ENCODE measurements at regions of chrX and their contacts with region 1.

Region 1: GRCh38 chrX:53683556-53684414 is 2.7 kb downstream of the HUWE1 start:
- DNase-seq: peak; percentile 78 to 98 (median 84)
- ATAC-seq: peak; percentile 82
- H3K4me3 ChIP-seq: peak overlapping the region; percentile 83
- H3K27ac ChIP-seq: peak overlapping the region; percentile 100
- H3K4me1 ChIP-seq: peaks cover 13 to 15% of the 10 kb centered on the region in 2 experiments; a peak in 4 of 5 replicates
- H3K27me3 ChIP-seq: no peaks in the 10 kb centered on the region
- CTCF ChIP-seq: peak in 1 of 3 experiments; percentile 41; a peak in 2 of 6 replicates
- EP300 ChIP-seq: no peak
- POLR2A ChIP-seq: peak; percentile 91
- RAD21 ChIP-seq: peak in 1 of 2 experiments; percentile 25; a peak in 1 of 4 replicates

Region 2: GRCh38 chrX:52118262-52118661 is 1565.5 kb before region 1 on chrX:
- CTCF ChIA-PET with region 1: no interaction called
- POLR2A ChIA-PET with region 1: no interaction called
- in situ Hi-C with region 1: no loop called
- intact Hi-C with region 1: no loop called
- DNase-seq: no peak
- ATAC-seq: no peak
- H3K4me3 ChIP-seq: no peak overlapping the region
- H3K27ac ChIP-seq: no peak overlapping the region
- H3K4me1 ChIP-seq: no peaks in the 10 kb centered on the region
- H3K27me3 ChIP-seq: no peaks in the 10 kb centered on the region
- CTCF ChIP-seq: no peak
- EP300 ChIP-seq: no peak
- POLR2A ChIP-seq: no peak
- RAD21 ChIP-seq: no peak

Region 3: DNA sequence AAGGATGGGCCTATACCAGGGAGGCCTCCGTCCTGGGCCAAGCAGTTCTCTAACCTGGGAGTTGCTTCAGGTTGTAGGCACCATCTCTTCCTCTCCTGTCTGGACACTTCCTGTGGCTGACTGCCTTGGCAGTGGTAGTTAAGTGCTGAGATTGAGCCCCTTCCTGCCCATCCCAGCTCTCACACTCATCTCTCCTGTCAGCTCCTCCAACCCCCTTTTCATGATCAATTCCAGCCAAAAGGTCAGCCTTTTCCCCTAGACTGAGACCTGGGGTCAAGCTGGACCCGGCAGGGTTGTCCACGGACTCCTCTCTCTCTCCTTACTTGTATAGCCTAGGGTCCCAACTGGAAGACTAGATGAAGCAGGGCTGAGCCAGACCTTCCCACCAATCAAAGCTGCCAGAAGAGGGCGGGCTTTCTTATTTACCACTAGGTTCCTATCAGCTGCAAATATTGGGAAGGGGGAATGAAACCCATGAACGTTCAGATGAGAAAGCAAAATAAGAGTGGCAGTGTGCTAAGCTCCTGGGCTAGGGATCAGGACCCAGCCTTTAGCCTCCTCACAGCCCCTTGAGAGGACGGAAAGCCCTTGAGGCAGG is 493.3 kb before region 1 on chrX:
- CTCF ChIA-PET with region 1: no interaction called
- POLR2A ChIA-PET with region 1: no interaction called
- in situ Hi-C with region 1: no loop called
- intact Hi-C with region 1: no loop called
- DNase-seq: peak; percentile 40 to 49 (median 42)
- ATAC-seq: peak; percentile 82
- H3K4me3 ChIP-seq: no peak overlapping the region
- H3K27ac ChIP-seq: no peak overlapping the region
- H3K4me1 ChIP-seq: peaks cover 0 to 6% of the 10 kb centered on the region in 2 experiments; a peak in 2 of 5 replicates
- H3K27me3 ChIP-seq: no peaks in the 10 kb centered on the region
- CTCF ChIP-seq: peak; percentile 24 to 59 (median 50); a peak in 4 of 6 replicates
- EP300 ChIP-seq: no peak
- POLR2A ChIP-seq: peak; percentile 64; the same call in 1 of the 2 replicates
- RAD21 ChIP-seq: no peak

Region 4: DNA sequence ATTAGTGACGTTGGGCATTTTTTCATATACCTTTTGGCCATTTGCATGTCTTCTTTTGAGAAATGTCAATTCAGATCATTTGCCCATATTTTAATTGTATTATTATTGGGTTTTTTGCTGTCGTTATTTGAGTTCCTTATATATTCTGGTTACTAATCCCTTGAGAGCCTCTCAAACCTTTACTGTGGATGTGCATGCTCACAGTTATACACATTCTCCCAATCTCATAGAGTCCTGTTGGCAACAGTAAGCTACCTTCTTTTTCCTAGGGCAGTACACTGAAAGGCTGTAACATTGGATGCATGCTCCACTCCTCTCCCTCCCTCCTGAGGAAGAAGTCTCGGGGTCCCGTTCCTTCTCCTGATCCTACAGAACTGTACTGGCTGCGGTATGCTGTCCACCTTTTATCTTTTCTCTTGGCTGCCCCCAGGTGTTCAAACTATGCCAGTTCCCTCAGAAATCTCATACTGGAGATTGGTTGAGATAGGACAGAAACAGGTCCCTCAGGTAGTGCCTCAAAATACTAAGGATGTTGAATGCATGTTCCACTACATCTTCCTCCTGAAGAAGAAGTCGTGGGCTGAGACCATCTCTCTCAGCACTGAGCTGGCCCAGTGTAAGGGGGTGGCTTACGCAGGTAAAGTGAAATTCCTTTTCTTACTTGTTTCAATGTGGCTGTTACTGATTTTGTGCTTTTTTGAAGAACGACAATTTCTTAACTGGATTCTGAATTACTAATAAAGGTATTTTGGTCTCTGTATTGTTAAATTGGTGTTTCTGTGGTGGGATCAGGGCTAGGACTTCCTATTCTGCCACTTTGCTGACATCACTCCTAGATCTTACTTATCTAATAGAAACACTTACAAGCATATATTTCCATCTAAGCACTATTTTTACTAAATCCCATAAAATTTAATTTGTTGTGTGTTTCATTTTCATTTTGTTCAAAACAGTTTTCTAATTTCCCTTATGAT is 148.2 kb after region 1 on chrX:
- CTCF ChIA-PET with region 1: no interaction called
- POLR2A ChIA-PET with region 1: no interaction called
- in situ Hi-C with region 1: no loop called
- intact Hi-C with region 1: loop called (anchors 5 kb)
- DNase-seq: peak; percentile 13 to 38 (median 20)
- ATAC-seq: peak; percentile 90
- H3K4me3 ChIP-seq: no peak overlapping the region
- H3K27ac ChIP-seq: no peak overlapping the region
- H3K4me1 ChIP-seq: no peaks in the 10 kb centered on the region
- H3K27me3 ChIP-seq: no peaks in the 10 kb centered on the region
- CTCF ChIP-seq: peak; percentile 45 to 56 (median 49); a peak in 4 of 6 replicates
- EP300 ChIP-seq: no peak
- POLR2A ChIP-seq: no peak
- RAD21 ChIP-seq: peak; percentile 52 to 67

Region 5: GRCh38 chrX:54044126-54044876 is 360.5 kb after region 1 on chrX and contains the start of gene PHF8:
- CTCF ChIA-PET with region 1: no interaction called
- POLR2A ChIA-PET with region 1: interaction called, 3 read pairs
- in situ Hi-C with region 1: no loop called
- intact Hi-C with region 1: loop called (anchors 10 kb)
- DNase-seq: peak; percentile 88 to 95 (median 90)
- ATAC-seq: peak; percentile 94
- H3K4me3 ChIP-seq: peak within 1 kb of the TSS; percentile 81
- H3K27ac ChIP-seq: peak within 1 kb of the TSS; percentile 93
- H3K4me1 ChIP-seq: peaks cover 0 to 10% of the 10 kb centered on the region in 2 experiments; a peak in 3 of 5 replicates
- H3K27me3 ChIP-seq: no peaks in the 10 kb centered on the region
- CTCF ChIP-seq: no peak
- EP300 ChIP-seq: no peak
- POLR2A ChIP-seq: peak; percentile 70
- RAD21 ChIP-seq: no peak
- polyA plus RNA-seq, gene PHF8: 2.5 to 2.9 TPM